ENCODE measurements at regions of chr14 and their contacts with region 1.

Region 1: DNA sequence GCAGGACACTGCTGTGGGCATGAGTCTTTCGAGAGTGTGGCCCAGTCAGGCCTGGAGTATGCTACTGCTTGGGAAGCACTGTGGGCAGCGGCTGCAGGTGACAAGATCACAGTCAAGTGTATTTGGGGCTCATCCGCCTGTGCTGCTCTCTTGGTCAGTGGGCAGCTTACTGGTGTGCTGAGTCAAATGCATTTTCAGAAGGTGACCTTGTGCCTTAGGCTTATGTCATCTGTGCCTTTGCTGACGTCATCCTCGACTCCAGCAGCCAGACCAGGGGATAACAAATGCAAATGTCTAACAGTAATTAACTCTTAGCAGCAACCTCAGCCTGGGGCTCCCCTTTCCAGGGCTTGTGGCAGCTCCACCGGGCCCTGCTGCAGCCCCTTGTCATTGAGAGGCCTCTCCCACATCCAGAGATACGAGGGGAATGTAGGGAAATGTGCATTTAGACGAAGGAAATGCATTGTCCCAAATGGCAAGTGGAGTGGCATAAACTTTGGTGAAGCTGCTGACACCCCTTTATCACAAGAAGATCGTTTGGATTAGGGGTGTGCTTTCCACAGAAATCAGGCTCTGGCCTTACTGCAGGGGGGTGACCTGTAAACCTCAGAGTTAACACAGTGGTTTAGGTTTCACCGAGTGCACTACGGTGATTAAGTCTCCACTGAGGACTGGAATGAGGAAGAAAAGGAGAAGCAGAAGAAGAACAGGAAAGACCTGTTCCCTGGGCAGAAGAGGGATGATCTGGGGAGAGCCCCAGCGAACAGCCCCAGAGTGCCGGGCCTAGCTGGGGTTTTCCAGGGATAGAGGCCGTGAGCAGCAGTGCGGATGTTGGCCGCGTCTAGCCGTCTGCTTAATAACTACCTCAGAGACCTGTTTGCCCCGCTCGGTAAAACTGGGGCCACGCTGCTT is 39.7 kb downstream of the PSMA6 start:
- DNase-seq: no peak
- ATAC-seq: no peak
- H3K4me3 Mint-ChIP-seq: no peak overlapping the region
- H3K27ac Mint-ChIP-seq: peak overlapping the region; percentile 95
- H3K4me1 Mint-ChIP-seq: peaks cover 30% of the 10 kb centered on the region
- H3K27me3 Mint-ChIP-seq: no peaks in the 10 kb centered on the region
- CTCF ChIP-seq: no peak

Region 2: GRCh38 chr14:34956931-34957330 is 374.9 kb before region 1 on chr14:
- CTCF ChIA-PET with region 1: no interaction called
- POLR2A ChIA-PET with region 1: no interaction called
- intact Hi-C with region 1: no loop called
- DNase-seq: no peak
- ATAC-seq: no peak
- H3K4me3 Mint-ChIP-seq: no peak overlapping the region
- H3K27ac Mint-ChIP-seq: no peak overlapping the region
- H3K4me1 Mint-ChIP-seq: no peaks in the 10 kb centered on the region
- H3K27me3 Mint-ChIP-seq: no peaks in the 10 kb centered on the region
- CTCF ChIP-seq: no peak

Region 3: GRCh38 chr14:35320472-35320871 is 11.4 kb before region 1 on chr14:
- CTCF ChIA-PET with region 1: interaction called, 4 read pairs
- POLR2A ChIA-PET with region 1: interaction called, 15 read pairs
- intact Hi-C with region 1: no loop called
- DNase-seq: no peak
- ATAC-seq: no peak
- H3K4me3 Mint-ChIP-seq: no peak overlapping the region
- H3K27ac Mint-ChIP-seq: no peak overlapping the region
- H3K4me1 Mint-ChIP-seq: peaks cover 3% of the 10 kb centered on the region
- H3K27me3 Mint-ChIP-seq: no peaks in the 10 kb centered on the region
- CTCF ChIP-seq: no peak

Measured in activated CD8-positive, alpha-beta T cell treated with anti-CD3 and anti-CD28 coated beads for 36 hours (primary cell).